ENCODE measurements at regions of chr5 and their contacts with region 1.

Region 1: DNA sequence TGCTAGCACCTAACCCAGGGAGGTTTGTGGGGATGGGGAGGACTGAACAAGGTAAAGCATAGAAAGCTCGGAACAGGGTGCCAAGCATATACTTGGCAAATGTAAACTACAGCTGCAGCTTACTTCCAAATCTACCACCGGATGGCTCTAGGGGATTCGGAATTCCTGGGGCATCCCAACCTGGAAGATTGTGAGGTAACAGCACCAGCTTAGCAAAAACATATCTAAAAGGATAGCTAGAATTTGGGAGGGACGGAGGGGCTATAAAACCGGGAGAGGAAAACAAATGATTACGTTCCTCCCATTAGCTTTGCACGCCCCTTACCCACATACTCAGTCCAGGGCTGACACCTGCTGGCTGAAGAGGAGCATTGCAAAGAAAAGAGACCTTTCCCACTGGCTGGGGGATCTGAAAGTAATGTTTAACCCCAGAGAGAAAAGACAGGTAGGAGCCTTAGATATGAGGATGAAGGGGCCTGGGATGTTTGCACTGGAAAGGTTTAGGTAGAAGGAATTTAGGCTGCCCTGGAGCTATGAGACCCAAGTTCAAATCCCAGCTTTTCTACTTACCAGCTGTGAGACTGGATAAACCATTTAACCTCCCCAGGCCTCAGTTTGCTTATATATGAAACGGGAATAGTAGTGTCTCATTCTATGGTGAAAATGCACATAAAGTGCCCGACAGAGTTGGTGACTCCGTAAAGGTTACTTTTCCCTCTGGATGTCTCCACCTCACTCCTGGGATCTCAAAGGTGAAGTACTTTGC is 73.6 kb downstream of the FAM114A2 start:
- DNase-seq: peak in 1 of 2 donors; percentile 23
- ATAC-seq: peak; percentile 52

Region 2: GRCh38 chr5:152532714-152533113 is 1432.3 kb before region 1 on chr5:
- intact Hi-C with region 1: loop called in 1 of 2 experiments (anchors 5 kb)
- DNase-seq: no peak
- ATAC-seq: no peak

Region 3: GRCh38 chr5:153496835-153497234 is 468.2 kb before region 1 on chr5:
- intact Hi-C with region 1: loop called in 1 of 2 experiments (anchors 5 kb)
- DNase-seq: no peak
- ATAC-seq: no peak

Region 4: GRCh38 chr5:153711755-153712154 is 253.3 kb before region 1 on chr5:
- intact Hi-C with region 1: no loop called
- DNase-seq: no peak
- ATAC-seq: no peak